Mucosa of descending colon (tissue), 3 donors: ENCODE measurements at regions of chr22 and their contacts with region 1.

Region 1: GRCh38 chr22:26461188-26461810 is 22.3 kb downstream of the HPS4 start:
- DNase-seq: peak in 2 of 3 donors; percentile 59 to 83
- ATAC-seq: peak; percentile 81
- H3K4me3 ChIP-seq: no peak overlapping the region
- H3K4me1 ChIP-seq: no peaks in the 10 kb centered on the region
- CTCF ChIP-seq: peak; percentile 60

Region 2: GRCh38 chr22:26398741-26399153 is 62.6 kb before region 1 on chr22:
- intact Hi-C with region 1: loop called (anchors 2 to 5 kb)
- DNase-seq: peak in 2 of 3 donors; percentile 60 to 84
- ATAC-seq: peak; percentile 85
- H3K4me3 ChIP-seq: no peak overlapping the region
- H3K4me1 ChIP-seq: no peaks in the 10 kb centered on the region
- CTCF ChIP-seq: peak; percentile 55

Region 3: DNA sequence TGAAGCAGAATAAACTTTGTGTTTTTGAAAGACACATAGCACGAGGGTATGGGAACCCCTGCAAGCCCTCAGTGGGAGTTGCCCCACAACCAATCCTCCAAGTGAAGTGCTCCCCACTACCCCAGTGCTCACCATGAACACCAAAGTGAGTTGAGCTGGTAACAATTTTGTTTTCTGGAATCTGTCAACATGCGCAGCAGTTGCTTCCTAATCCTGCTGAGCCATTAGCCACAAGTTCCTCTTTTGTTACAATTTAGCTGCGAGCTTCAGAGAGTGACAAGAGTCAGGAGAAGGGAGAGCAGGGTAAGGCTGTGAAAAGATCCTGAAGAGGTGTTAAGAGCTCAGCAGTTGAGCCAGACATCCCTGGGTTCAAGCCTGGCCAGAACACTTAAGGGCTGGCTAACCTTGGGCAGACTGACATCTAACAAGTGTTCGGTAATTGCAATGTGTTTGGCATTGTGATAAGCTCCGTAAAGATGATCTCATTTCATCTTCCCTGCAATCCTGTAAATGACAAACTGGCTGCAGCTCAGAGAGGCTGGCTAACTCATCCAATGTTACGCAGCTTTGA is 56.4 kb before region 1 on chr22:
- intact Hi-C with region 1: loop called in 1 of 2 experiments (anchors 5 kb)
- DNase-seq: no peak
- ATAC-seq: no peak
- H3K4me3 ChIP-seq: no peak overlapping the region
- H3K4me1 ChIP-seq: no peaks in the 10 kb centered on the region
- CTCF ChIP-seq: no peak